GM12878 (cell line): ENCODE measurements at regions of chr14 and their contacts with region 1.

Region 1: GRCh38 chr14:100850841-100851585 is 25.1 kb downstream of the MEG3 start:
- DNase-seq: no peak
- ATAC-seq: peak; percentile 99
- H3K4me3 ChIP-seq: no peak overlapping the region
- H3K27ac ChIP-seq: no peak overlapping the region
- H3K4me1 ChIP-seq: no peaks in the 10 kb centered on the region
- H3K27me3 ChIP-seq: no peaks in the 10 kb centered on the region
- CTCF ChIP-seq: peak; percentile 73 to 86 (median 77)
- EP300 ChIP-seq: no peak
- POLR2A ChIP-seq: no peak
- RAD21 ChIP-seq: peak; percentile 67

Region 2: GRCh38 chr14:100864206-100864605 is 13.2 kb after region 1 on chr14:
- CTCF ChIA-PET with region 1: interaction called, 11 read pairs
- POLR2A ChIA-PET with region 1: no interaction called
- RAD21 ChIA-PET with region 1: interaction called, 3 read pairs
- SMC1A ChIA-PET with region 1: no interaction called
- in situ Hi-C with region 1: no loop called
- intact Hi-C with region 1: no loop called
- DNase-seq: no peak
- ATAC-seq: no peak
- H3K4me3 ChIP-seq: no peak overlapping the region
- H3K27ac ChIP-seq: no peak overlapping the region
- H3K4me1 ChIP-seq: no peaks in the 10 kb centered on the region
- H3K27me3 ChIP-seq: no peaks in the 10 kb centered on the region
- CTCF ChIP-seq: no peak
- EP300 ChIP-seq: no peak
- POLR2A ChIP-seq: no peak
- RAD21 ChIP-seq: no peak

Region 3: DNA sequence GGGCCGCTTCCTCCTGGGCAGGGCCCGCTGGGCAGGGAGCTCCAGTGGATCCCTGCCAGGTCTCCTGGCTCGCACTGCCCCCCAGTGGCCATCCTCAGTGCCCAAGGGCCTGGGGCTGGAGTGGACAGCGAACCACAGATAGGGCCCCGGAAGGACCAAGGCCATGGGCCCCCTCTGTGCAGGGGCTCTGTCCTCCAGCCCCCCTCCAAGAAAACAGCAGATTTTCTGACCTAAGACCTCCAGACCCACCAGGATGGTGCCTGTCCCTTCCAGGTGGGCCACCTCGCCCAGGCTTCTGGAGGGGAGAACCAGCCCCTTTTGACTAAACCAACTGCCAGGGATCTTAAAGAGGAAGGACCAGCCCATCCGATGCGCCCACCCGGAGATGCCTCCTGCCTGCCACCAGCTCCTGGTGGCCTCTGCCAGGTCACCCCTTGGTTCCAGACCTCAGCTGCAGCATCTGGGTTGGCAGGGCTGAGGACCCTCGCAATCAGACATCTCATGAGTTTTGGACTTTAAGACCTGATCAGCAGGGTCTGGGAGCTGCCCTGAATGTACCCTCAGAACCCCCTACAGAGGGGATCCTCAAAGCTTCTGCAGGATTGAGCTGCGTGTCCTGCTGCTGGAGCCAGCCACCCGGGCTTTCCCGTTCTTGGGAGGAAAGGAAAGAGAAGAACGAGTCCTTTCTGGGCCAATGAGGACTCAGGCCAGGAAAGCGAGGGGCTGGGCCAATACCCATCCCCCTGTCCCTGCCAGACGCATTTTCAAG is 384.5 kb after region 1 on chr14:
- CTCF ChIA-PET with region 1: interaction called, 3 read pairs
- POLR2A ChIA-PET with region 1: no interaction called
- RAD21 ChIA-PET with region 1: interaction called, 4 read pairs
- SMC1A ChIA-PET with region 1: no interaction called
- in situ Hi-C with region 1: no loop called
- intact Hi-C with region 1: loop called (anchors 10 kb)
- DNase-seq: no peak
- ATAC-seq: peak; percentile 78
- H3K4me3 ChIP-seq: no peak overlapping the region
- H3K27ac ChIP-seq: no peak overlapping the region
- H3K4me1 ChIP-seq: no peaks in the 10 kb centered on the region
- H3K27me3 ChIP-seq: no peaks in the 10 kb centered on the region
- CTCF ChIP-seq: peak; percentile 12 to 49 (median 46); a peak in 3 of 6 replicates
- EP300 ChIP-seq: no peak
- POLR2A ChIP-seq: no peak
- RAD21 ChIP-seq: peak; percentile 45

Region 4: GRCh38 chr14:101628471-101628966 is 777.5 kb after region 1 on chr14:
- CTCF ChIA-PET with region 1: interaction called, 3 read pairs
- POLR2A ChIA-PET with region 1: no interaction called
- RAD21 ChIA-PET with region 1: no interaction called
- SMC1A ChIA-PET with region 1: no interaction called
- in situ Hi-C with region 1: loop called (anchors 5 kb)
- intact Hi-C with region 1: loop called (anchors 1 kb)
- DNase-seq: no peak
- ATAC-seq: peak; percentile 96
- H3K4me3 ChIP-seq: no peak overlapping the region
- H3K27ac ChIP-seq: no peak overlapping the region
- H3K4me1 ChIP-seq: no peaks in the 10 kb centered on the region
- H3K27me3 ChIP-seq: no peaks in the 10 kb centered on the region; a peak in 2 of 4 replicates
- CTCF ChIP-seq: peak; percentile 90 to 95 (median 90)
- EP300 ChIP-seq: no peak
- POLR2A ChIP-seq: no peak
- RAD21 ChIP-seq: peak; percentile 76

Region 5: GRCh38 chr14:101634850-101635748 is 784.1 kb after region 1 on chr14:
- CTCF ChIA-PET with region 1: interaction called, 3 read pairs
- POLR2A ChIA-PET with region 1: no interaction called
- RAD21 ChIA-PET with region 1: no interaction called
- SMC1A ChIA-PET with region 1: no interaction called
- in situ Hi-C with region 1: loop called (anchors 5 kb)
- intact Hi-C with region 1: no loop called
- DNase-seq: no peak
- ATAC-seq: no peak
- H3K4me3 ChIP-seq: no peak overlapping the region
- H3K27ac ChIP-seq: no peak overlapping the region
- H3K4me1 ChIP-seq: no peaks in the 10 kb centered on the region
- H3K27me3 ChIP-seq: no peaks in the 10 kb centered on the region; a peak in 1 of 4 replicates
- CTCF ChIP-seq: no peak
- EP300 ChIP-seq: no peak
- POLR2A ChIP-seq: no peak
- RAD21 ChIP-seq: no peak